ENCODE measurements at regions of chr11 and their contacts with region 1.

Region 1: GRCh38 chr11:49221112-49221511 is 12.7 kb upstream of the FOLH1 start:
- DNase-seq: no peak
- ATAC-seq: no peak
- H3K4me3 ChIP-seq: no peak overlapping the region
- H3K27ac ChIP-seq: no peak overlapping the region
- H3K4me1 ChIP-seq: no peaks in the 10 kb centered on the region
- H3K27me3 ChIP-seq: no peaks in the 10 kb centered on the region
- CTCF ChIP-seq: no peak

Region 2: GRCh38 chr11:49533204-49533603 is 312.1 kb after region 1 on chr11:
- intact Hi-C with region 1: loop called in 4 of 10 experiments (anchors 5 to 10 kb)
- DNase-seq: no peak
- ATAC-seq: no peak
- H3K4me3 ChIP-seq: no peak overlapping the region
- H3K27ac ChIP-seq: no peak overlapping the region
- H3K4me1 ChIP-seq: no peaks in the 10 kb centered on the region
- H3K27me3 ChIP-seq: no peaks in the 10 kb centered on the region
- CTCF ChIP-seq: no peak